ENCODE measurements at regions of chr4 and their contacts with region 1.

Region 1: DNA sequence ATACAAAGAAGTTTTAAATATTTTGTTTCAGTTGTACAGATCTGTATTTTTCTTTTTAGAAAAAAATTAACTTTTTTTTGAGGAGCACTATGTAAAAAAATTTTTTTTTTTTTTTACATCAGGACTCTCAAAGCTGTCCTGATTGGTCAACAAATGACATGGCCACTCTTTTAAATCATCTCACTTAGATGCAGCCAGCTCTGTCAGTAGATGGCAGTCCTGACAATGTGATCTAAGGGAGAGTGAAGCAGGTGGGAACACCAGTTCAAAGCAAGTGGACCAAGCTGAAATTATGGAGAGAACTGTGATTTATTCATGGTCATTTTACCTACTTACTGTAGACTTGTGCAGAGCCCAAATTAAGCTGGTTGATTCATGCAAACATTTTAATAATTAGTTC is 174.6 kb upstream of the GPRIN3 start:
- DNase-seq: no peak
- ATAC-seq: peak in 3 of 4 donors; percentile 45 to 70 (median 64)
- H3K4me3 ChIP-seq: no peak overlapping the region
- H3K27ac ChIP-seq: no peak overlapping the region
- H3K4me1 ChIP-seq: no peaks in the 10 kb centered on the region
- H3K27me3 ChIP-seq: no peaks in the 10 kb centered on the region
- CTCF ChIP-seq: peak in 5 of 12 donors; percentile 9 to 33 (median 26)
- POLR2A ChIP-seq: no peak

Region 2: DNA sequence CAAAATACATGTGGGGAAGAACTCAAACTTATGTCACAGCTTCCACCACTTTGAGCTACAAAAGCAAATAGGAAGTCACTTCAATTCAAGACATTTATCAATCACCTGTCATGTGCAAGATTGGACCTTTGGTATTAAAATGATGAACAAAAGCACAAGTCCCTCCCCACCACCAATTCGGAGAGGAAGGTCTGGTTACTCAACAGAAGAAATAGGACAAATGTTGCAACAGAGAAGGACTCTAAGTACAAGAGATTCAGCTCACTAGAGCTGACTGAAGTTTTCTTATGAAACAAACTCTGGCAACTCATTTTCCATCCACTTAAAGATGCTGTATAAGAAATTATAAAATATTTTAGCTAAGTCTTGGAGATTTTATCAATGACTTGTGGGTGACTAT is 396.4 kb after region 1 on chr4:
- intact Hi-C with region 1: loop called in 1 of 10 experiments (anchors 10 kb)
- DNase-seq: no peak
- ATAC-seq: no peak
- H3K4me3 ChIP-seq: no peak overlapping the region
- H3K27ac ChIP-seq: no peak overlapping the region
- H3K4me1 ChIP-seq: no peaks in the 10 kb centered on the region
- H3K27me3 ChIP-seq: no peaks in the 10 kb centered on the region
- CTCF ChIP-seq: no peak
- POLR2A ChIP-seq: no peak